ENCODE measurements at regions of chr7 and their contacts with region 1.

Region 1: GRCh38 chr7:128209229-128210035 is 31.6 kb upstream of the LEP start:
- DNase-seq: peak; percentile 60
- H3K4me3 ChIP-seq: no peak overlapping the region
- H3K27ac ChIP-seq: no peak overlapping the region
- H3K4me1 ChIP-seq: peaks cover 11% of the 10 kb centered on the region
- H3K27me3 ChIP-seq: no peaks in the 10 kb centered on the region
- CTCF ChIP-seq: peak; percentile 98 to 99

Region 2: DNA sequence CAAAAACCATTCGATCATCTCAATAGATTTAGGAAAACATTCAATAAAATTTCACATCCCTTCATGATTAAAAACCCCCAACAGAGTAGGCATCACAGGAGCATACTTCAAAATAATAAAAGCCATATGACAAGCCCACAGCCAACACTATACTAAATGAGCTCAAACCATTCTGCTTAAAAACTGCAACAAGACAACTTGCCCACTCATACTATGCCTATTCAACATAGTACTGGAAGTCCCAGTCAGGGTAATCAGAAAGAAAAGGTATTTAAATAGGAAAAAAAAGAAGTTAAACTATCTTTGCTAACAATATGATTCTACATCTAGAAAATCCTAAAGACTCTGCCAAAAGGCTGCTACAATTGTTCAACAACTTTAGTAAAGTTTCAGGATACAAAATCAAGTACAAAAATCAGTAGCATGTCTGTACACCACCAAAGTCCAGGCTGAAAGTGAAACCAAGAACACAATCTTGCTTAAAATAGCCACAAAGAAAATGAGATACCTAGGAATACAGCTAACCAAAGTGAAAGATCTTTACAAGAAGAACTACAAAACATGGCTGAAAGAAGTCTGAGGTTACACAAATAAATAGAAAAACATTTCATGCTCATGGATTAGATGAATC is 1839.3 kb before region 1 on chr7:
- CTCF ChIA-PET with region 1: interaction called, 23 read pairs
- dilution Hi-C with region 1: no loop called
- in situ Hi-C with region 1: no loop called
- intact Hi-C with region 1: no loop called
- DNase-seq: no peak
- H3K4me3 ChIP-seq: no peak overlapping the region
- H3K27ac ChIP-seq: no peak overlapping the region
- H3K4me1 ChIP-seq: no peaks in the 10 kb centered on the region
- H3K27me3 ChIP-seq: no peaks in the 10 kb centered on the region
- CTCF ChIP-seq: no peak

Region 3: DNA sequence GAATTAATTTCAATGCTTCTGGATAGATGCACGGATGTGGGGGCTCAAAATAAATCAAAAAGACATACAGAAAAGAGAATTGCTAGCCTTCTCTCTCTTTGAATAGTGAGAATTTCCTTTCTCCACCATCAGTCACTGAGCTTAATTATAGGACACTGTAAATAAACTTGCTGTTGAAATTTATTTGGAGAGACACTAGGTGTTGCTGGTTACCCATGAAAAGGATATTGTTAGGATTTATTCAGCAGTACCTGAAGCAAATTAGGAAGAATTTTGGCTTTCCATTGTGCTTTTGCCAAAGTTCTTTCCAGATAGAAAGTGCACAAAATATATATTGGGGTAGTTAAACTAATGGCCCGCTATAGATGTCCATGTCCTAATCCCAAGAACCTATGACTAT is 651.6 kb before region 1 on chr7:
- CTCF ChIA-PET with region 1: no interaction called
- dilution Hi-C with region 1: no loop called
- in situ Hi-C with region 1: no loop called
- intact Hi-C with region 1: loop called (anchors 1 kb)
- DNase-seq: no peak
- H3K4me3 ChIP-seq: no peak overlapping the region
- H3K27ac ChIP-seq: no peak overlapping the region
- H3K4me1 ChIP-seq: no peaks in the 10 kb centered on the region
- H3K27me3 ChIP-seq: no peaks in the 10 kb centered on the region
- CTCF ChIP-seq: peak in 1 of 2 donors; percentile 6

Region 4: DNA sequence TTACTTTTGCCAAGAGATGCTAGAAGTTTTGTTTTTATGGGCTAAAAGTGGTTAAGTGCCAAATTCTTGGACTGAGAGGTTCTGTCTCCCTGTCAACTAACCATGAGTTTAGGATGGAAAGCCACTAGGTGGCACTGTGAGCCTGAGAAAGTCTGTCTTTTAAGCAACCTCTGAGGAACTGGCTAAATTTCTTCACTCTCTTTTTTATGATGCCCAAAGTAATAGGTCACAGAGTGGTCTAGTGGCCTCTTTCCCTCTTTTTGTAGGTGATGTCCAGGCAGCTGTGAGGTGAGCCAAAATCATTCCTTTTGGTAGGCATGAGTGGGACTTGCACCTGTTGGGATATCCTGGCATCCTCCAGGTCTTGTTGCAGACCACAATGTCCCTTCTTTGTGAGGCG is 500.6 kb before region 1 on chr7:
- CTCF ChIA-PET with region 1: interaction called, 4 read pairs
- dilution Hi-C with region 1: loop called (anchors 25 kb)
- in situ Hi-C with region 1: loop called (anchors 10 to 25 kb)
- intact Hi-C with region 1: loop called (anchors 1 kb)
- DNase-seq: peak; percentile 56
- H3K4me3 ChIP-seq: no peak overlapping the region
- H3K27ac ChIP-seq: no peak overlapping the region
- H3K4me1 ChIP-seq: peaks cover 12% of the 10 kb centered on the region
- H3K27me3 ChIP-seq: no peaks in the 10 kb centered on the region
- CTCF ChIP-seq: peak; percentile 72 to 76

Region 5: DNA sequence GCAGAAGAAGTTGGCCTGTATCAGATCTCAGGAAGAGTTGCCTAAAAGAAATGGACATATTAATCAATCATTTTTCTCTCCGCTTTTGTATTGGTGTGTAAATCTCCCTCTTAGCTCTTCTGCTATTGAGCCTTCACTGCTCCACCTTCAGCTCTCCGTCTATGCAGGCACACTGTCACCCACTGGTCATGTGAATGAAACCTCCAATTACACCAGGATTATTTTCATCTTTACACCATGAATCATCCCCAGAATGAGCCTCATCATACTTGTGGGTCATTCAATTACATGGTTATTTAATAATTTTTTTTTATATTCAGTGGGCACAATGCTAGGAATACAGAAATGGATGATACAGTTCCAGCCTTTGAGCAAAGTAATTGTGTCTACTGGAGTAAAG is 270.8 kb before region 1 on chr7:
- CTCF ChIA-PET with region 1: no interaction called
- dilution Hi-C with region 1: no loop called
- in situ Hi-C with region 1: no loop called
- intact Hi-C with region 1: loop called (anchors 5 kb)
- DNase-seq: peak; percentile 77
- H3K4me3 ChIP-seq: no peak overlapping the region
- H3K27ac ChIP-seq: no peak overlapping the region
- H3K4me1 ChIP-seq: peaks cover 10% of the 10 kb centered on the region
- H3K27me3 ChIP-seq: no peaks in the 10 kb centered on the region
- CTCF ChIP-seq: peak in 1 of 2 donors; percentile 22

Region 6: DNA sequence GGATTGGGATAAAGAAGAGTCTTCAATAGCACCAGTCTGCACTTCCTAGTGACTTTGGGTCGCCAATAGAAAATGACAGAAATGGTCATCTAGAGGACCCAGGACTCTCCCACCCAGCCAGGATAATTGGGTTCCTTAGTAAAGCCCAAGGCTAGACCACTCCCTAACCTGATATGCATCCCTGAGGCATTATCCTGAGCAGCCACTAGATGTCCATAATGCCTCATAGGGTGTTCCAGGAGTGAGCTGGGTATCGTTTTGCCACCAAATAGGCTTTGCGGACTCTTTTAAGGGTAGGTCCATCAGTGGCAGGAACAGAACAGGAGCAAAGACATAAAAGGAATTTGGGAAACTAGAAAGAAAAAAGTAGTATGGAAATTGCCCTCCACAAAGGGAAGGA is 173.7 kb before region 1 on chr7:
- CTCF ChIA-PET with region 1: interaction called, 8 read pairs
- dilution Hi-C with region 1: no loop called
- in situ Hi-C with region 1: no loop called
- intact Hi-C with region 1: loop called (anchors 5 kb)
- DNase-seq: no peak
- H3K4me3 ChIP-seq: no peak overlapping the region
- H3K27ac ChIP-seq: no peak overlapping the region
- H3K4me1 ChIP-seq: peaks cover 13% of the 10 kb centered on the region
- H3K27me3 ChIP-seq: no peaks in the 10 kb centered on the region
- CTCF ChIP-seq: peak; percentile 30 to 39

Region 7: DNA sequence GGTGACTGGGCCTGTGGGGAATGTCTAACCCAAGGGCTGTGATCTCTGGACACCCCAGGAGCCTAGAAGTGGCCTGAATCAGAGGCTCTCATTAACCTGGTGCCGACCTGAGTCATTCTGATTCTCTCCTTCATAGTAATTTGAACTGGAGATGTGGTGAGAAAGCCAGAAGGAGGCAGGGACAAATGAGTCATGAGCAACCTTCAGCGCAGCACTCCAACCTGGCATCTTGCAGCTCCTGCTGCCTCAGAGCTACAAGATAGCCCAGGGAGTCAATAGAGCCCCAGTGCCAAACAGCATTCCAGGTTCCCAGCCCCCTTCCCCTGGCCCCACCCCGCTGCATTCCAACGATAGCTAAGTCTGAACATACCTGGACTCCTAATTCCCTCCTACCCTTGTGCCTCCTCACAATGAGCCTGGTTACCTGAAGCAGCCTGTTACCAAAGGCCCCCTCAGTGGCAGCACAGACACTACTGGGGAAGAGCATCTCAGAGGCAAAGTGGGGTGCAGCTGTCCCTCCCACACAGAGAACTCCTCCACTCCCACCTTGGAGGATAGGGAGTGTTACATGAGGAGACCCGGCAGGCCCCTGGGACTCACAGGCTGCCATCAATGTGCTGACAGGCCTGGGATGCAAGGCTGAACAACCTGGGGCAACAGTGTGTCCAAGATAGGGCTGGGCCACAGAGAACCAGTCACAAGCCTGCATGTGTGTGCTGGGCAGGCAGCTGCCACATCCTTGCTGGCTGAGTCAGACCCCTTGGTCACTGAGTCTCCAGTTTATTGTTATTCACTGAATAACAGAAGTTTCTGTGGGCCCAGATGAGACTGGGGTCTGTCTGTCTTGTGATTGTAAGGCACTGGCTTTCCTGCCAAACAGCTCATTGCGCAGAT is 45.1 kb before region 1 on chr7:
- CTCF ChIA-PET with region 1: no interaction called
- dilution Hi-C with region 1: no loop called
- in situ Hi-C with region 1: no loop called
- intact Hi-C with region 1: loop called (anchors 1 kb)
- DNase-seq: peak; percentile 96
- H3K4me3 ChIP-seq: no peak overlapping the region
- H3K27ac ChIP-seq: peak overlapping the region; percentile 92
- H3K4me1 ChIP-seq: peaks cover 61% of the 10 kb centered on the region
- H3K27me3 ChIP-seq: peaks cover 6% of the 10 kb centered on the region
- CTCF ChIP-seq: no peak